ENCODE measurements at regions of chr6 and their contacts with region 1.

Region 1: GRCh38 chr6:13355043-13355951 is 27.0 kb upstream of the TBC1D7 start:
- DNase-seq: peak; percentile 54
- ATAC-seq: peak; percentile 67
- H3K4me3 Mint-ChIP-seq: peak overlapping the region; percentile 65
- H3K27ac Mint-ChIP-seq: peak overlapping the region; percentile 96
- H3K4me1 Mint-ChIP-seq: peaks cover 44% of the 10 kb centered on the region
- H3K27me3 Mint-ChIP-seq: no peaks in the 10 kb centered on the region

Region 2: GRCh38 chr6:13068586-13069210 is 286.6 kb before region 1 on chr6:
- CTCF ChIA-PET with region 1: no interaction called
- DNase-seq: no peak
- ATAC-seq: no peak
- H3K4me3 Mint-ChIP-seq: no peak overlapping the region
- H3K27ac Mint-ChIP-seq: no peak overlapping the region
- H3K4me1 Mint-ChIP-seq: no peaks in the 10 kb centered on the region
- H3K27me3 Mint-ChIP-seq: peaks cover 11% of the 10 kb centered on the region

Region 3: GRCh38 chr6:13328076-13328874 is 27.0 kb before region 1 on chr6 and contains the start of gene TBC1D7:
- CTCF ChIA-PET with region 1: interaction called, 11 read pairs
- DNase-seq: peak; percentile 95
- ATAC-seq: peak; percentile 96
- H3K4me3 Mint-ChIP-seq: peak within 1 kb of the TSS; percentile 87
- H3K27ac Mint-ChIP-seq: peak within 1 kb of the TSS; percentile 91
- H3K4me1 Mint-ChIP-seq: peaks cover 25% of the 10 kb centered on the region
- H3K27me3 Mint-ChIP-seq: no peaks in the 10 kb centered on the region
- total RNA-seq, gene TBC1D7: 25.1 to 26.0 TPM

Region 4: DNA sequence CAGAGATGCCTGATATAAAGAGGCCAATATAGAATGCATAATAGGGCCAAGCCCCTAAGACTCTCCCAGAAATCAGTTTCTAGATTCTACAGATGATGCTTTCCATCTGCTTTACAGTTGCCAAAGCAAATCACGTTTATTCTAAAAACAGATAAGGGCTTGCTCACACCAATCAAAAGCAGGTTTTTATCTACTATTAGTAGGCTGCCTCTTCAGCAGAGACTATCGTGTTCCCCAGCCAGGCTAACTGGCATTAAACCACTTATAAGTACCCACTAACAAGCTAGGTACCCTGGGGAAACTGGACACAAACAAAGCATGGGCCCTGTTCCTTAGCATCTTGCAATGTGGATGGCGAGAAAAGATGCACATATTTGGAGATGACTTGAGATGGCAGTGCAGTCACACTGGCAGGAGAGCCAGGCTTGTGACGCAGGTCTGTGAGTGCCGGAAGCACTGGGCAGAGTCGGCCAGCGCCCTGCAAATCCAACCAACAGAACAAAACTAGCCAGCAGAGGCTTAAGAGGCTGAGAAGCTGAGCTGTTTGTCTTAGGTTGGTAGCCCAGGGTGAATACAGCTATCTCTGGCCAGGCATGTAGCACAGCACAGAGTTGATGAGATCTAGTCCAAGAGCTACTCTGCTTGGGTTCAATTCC is 58.7 kb after region 1 on chr6:
- CTCF ChIA-PET with region 1: no interaction called
- DNase-seq: no peak
- ATAC-seq: no peak
- H3K4me3 Mint-ChIP-seq: no peak overlapping the region
- H3K27ac Mint-ChIP-seq: no peak overlapping the region
- H3K4me1 Mint-ChIP-seq: no peaks in the 10 kb centered on the region
- H3K27me3 Mint-ChIP-seq: no peaks in the 10 kb centered on the region